HAP-1 (cell line): ENCODE measurements at regions of chr1 and their contacts with region 1.

Region 1: DNA sequence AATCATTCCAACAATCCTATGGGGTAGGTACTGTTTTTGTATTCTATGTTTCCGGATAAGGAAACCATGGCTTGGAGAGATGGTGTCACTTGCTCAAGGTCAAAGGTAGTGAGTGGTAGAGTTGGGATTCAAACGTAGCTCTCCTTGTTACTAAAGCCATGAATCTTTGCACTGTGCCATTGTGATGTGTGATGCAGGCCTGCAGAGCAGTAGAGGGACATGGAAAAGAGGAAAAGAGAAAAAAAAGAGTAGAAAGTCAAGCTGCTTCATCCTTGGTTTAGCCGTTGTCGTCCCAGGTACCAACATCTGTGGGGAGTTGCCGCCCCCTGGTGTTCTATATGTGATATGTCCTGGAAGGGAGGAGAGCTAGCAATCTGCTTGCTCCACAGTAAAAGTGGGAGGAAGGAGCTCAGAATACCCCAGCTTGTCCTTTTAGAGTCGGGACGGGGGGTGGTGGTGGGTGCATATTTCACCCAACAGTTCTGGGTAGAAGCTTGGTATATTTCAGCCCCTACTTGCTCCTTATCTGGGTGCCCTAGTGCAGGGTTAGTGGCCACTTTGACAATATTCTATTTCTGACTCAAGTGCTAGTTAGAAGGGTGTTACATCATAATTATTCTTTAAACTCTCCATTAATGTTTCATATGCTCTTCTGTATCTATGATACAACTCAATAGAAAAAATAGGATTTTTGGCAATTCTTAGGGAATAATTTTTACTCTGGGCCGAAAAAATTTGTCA is 98.4 kb downstream of the EBNA1BP2 start:
- DNase-seq: peak; percentile 76 to 81
- H3K4me3 ChIP-seq: no peak overlapping the region
- H3K4me1 ChIP-seq: no peaks in the 10 kb centered on the region
- H3K27me3 ChIP-seq: no peaks in the 10 kb centered on the region

Region 2: GRCh38 chr1:42593486-42594100 is 480.1 kb before region 1 on chr1:
- in situ Hi-C with region 1: loop called (anchors 25 kb)
- DNase-seq: no peak
- H3K4me3 ChIP-seq: no peak overlapping the region
- H3K4me1 ChIP-seq: no peaks in the 10 kb centered on the region
- H3K27me3 ChIP-seq: peaks cover 13% of the 10 kb centered on the region

Region 3: DNA sequence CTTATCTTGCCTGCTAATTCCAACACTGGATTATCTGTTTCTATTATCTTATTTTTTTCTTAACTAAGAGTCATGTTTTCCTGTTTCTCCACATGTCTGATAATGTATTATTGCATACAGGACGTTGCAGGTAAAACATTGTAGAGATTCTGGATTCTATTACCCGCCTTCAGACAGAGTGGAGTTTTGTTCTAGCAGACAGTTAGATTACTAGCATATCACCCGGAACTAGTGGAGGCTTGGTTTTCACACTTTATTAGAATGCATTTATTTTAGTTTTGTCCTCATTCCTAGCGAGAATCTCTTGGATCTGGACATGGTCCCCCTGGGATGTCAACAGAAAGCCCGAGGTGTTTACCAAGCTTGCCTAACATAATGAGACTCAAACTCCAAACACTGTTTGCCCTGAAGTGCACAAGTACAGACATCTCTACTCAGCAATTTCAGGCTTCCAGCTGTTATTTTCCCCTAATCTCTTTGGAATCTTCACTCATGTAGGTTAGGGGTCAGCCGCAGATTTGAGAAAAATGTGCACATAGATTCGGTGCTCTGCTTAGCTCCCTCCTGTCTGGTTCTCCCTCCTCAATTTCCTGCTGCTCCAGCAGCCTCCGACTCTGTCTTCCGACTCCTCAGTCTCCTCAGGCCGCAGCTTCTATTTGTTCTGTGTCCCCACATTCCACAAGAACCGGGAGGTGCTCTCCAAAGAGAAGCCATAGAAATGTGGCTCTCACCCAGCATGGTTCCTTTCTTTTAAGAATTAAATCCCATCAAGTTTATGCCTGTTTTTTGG is 420.2 kb after region 1 on chr1:
- in situ Hi-C with region 1: no loop called
- DNase-seq: no peak
- H3K4me3 ChIP-seq: no peak overlapping the region
- H3K4me1 ChIP-seq: no peaks in the 10 kb centered on the region
- H3K27me3 ChIP-seq: peaks cover 3% of the 10 kb centered on the region; the same call in 1 of the 2 replicates